ENCODE measurements at regions of chr9 and their contacts with region 1.

Region 1: DNA sequence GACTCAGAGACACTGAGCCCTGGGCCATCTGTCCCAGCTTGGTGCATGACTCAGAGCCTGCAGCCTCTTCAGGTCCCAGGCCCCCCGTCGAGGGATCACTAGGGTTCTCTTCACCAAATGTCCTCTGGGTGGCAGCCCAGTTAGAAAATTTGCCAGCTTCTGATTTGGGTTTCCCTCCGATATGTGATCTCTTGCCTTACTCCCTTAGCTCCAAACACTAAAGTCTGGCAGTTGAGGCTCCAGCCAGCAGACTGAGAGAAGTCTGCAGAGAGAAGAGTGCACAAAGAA is 59.4 kb upstream of the GARNL3 start:
- DNase-seq: no peak
- ATAC-seq: no peak
- H3K4me3 ChIP-seq: no peak overlapping the region
- H3K27ac ChIP-seq: no peak overlapping the region
- H3K4me1 ChIP-seq: no peaks in the 10 kb centered on the region
- H3K27me3 ChIP-seq: no peaks in the 10 kb centered on the region
- CTCF ChIP-seq: no peak
- POLR2A ChIP-seq: no peak

Region 2: DNA sequence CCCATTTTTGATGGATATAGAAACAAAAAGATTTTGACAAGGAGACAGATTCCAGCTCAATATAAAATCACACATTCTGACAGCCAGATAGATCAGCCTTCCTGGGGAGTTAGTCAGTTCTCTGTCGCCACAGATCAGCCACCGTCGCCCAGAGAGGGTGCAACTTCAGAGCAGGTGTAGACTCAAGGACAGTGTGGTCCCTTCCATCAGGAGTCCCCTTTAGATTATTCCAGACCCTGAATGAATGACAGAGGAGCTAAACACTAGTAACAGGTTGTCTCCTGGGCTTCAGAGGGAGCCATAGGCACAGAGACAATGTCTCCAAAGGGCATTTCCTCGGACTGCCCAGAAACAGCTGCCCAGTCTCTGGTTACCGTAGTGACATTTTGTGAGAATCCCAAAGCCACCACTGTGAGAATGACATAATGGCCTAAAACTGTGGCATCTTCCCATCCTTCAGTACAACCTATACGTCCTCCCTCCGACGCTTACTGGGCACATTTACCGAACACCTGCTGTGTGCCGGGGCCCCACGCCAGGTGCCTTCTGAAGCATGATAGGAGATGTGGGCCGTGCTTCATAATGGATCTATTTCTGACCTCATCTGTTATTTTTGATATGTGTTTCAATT is 144.5 kb after region 1 on chr9:
- intact Hi-C with region 1: loop called (anchors 5 kb)
- DNase-seq: no peak
- ATAC-seq: no peak
- H3K4me3 ChIP-seq: no peak overlapping the region
- H3K27ac ChIP-seq: no peak overlapping the region
- H3K4me1 ChIP-seq: no peaks in the 10 kb centered on the region
- H3K27me3 ChIP-seq: no peaks in the 10 kb centered on the region
- CTCF ChIP-seq: no peak
- POLR2A ChIP-seq: no peak

Region 3: DNA sequence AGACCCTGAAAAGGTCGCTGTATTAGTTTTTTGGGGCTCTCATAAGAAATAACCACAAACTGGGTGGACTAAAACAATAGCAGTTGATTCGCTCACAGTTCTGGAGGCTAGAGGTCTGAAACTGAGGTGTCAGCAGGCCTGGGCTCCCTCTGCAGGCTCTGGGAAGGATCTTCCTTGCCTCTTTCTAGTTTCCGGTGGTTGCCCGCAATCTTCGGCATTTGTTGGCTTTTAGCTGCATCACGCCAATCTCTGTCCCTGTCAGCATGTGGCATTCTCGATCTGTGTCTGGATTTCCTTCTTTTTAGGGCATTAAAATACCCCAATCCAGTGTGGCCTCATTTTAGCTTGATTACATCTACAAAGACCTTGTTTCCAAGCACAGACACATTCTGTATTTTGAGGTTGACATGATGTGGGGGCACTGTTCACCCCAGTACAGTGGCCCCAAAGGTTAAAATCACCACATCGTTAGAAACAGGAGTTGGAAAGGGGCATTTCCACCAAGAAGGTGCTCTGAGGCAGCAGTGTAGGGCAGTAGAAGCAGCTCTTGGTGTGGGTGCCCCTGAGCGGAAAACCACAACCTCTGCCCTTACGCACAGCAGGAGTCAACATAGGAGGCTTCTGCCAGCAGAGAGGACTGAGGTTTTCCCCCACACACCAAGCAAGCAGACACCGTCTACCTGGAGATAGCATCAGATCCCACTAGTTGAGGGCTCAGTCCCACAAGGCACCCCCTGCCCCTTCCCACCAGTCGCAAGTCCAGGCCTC is 232.6 kb after region 1 on chr9:
- intact Hi-C with region 1: no loop called
- DNase-seq: no peak
- ATAC-seq: no peak
- H3K4me3 ChIP-seq: no peak overlapping the region
- H3K27ac ChIP-seq: no peak overlapping the region
- H3K4me1 ChIP-seq: no peaks in the 10 kb centered on the region
- H3K27me3 ChIP-seq: no peaks in the 10 kb centered on the region
- CTCF ChIP-seq: no peak
- POLR2A ChIP-seq: no peak

Measured in body of pancreas (tissue), 4 donors.